Transverse colon (tissue), 4 donors: ENCODE measurements at regions of chr15 and their contacts with region 1.

Region 1: DNA sequence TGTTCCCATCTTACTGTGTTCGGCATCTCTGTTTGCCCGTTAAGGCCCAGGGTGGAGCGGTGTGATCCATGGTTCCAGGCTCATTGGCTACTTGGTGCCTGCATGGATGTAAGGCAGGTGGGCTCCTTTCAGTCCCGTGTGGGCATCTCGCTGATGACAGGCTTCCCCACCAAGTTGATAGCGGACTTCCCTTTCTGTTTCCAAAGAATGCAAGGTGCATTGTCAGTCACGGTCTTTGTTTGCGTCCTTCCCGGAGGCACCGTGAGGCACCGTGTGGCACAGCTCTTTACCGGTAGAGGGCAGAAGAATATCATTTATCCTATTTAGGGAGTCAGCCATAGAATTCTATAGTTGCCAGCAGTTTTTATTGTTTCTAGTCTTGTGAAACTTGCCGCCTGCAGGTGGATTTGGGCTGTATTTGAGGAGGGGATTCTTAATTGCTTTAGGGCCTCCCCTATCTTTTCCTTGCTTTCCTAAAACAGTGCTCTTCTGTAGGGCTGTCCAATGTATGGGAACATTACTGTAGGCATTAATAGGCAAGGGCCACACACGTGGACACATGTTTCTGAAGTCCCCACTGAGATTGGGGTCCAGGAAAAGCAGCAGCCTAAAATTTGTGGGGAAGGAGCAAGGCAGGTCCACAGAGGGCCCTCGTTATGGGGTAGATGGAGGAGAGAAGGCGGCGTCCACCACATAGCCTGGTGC is 244.1 kb downstream of the SLCO3A1 start:
- DNase-seq: peak; percentile 46
- H3K4me3 ChIP-seq: no peak overlapping the region
- H3K27ac ChIP-seq: no peak overlapping the region
- H3K4me1 ChIP-seq: peaks cover 0 to 6% (median 3%) of the 10 kb centered on the region in 4 donors
- H3K27me3 ChIP-seq: no peaks in the 10 kb centered on the region
- CTCF ChIP-seq: peak; percentile 67 to 82 (median 78)
- EP300 ChIP-seq: no peak
- POLR2A ChIP-seq: no peak

Region 2: DNA sequence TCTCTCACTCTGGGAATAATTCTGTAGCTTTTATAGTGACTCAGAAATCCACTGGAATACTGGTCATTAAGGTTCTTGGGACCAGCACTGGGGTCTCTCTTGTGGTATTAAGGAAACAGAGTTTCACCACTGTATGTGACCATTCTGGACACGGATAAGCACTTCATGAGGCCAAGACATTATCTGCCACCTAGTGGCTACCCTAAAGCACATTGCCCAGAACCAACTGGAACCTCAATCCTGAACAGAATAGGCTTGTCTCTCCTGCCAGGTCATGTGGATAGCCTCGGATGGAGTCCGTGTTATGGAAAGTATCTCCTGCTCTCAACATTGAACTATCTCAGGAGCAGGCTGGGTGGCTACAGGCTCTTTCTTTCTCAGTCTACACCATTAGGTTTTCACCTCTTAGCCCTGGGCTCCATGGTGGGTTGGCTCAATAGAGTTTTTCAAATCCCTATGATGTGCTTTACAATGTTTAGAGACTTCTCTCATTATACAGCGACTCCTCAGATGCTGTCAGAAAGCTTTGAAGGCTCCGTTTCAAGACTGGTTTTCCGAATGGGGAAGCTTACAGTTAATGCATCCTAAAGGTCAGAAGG is 128.5 kb after region 1 on chr15:
- in situ Hi-C with region 1: loop called in 2 of 4 experiments (anchors 10 kb)
- intact Hi-C with region 1: no loop called
- DNase-seq: no peak
- H3K4me3 ChIP-seq: no peak overlapping the region
- H3K27ac ChIP-seq: no peak overlapping the region
- H3K4me1 ChIP-seq: no peaks in the 10 kb centered on the region
- H3K27me3 ChIP-seq: no peaks in the 10 kb centered on the region
- CTCF ChIP-seq: peak; percentile 16 to 46 (median 42)
- EP300 ChIP-seq: no peak
- POLR2A ChIP-seq: no peak

Region 3: GRCh38 chr15:92383519-92384326 is 286.1 kb after region 1 on chr15:
- in situ Hi-C with region 1: loop called in 1 of 4 experiments (anchors 10 kb)
- intact Hi-C with region 1: no loop called
- DNase-seq: no peak
- H3K4me3 ChIP-seq: no peak overlapping the region
- H3K27ac ChIP-seq: no peak overlapping the region
- H3K4me1 ChIP-seq: no peaks in the 10 kb centered on the region
- H3K27me3 ChIP-seq: peaks cover 37% of the 10 kb centered on the region
- CTCF ChIP-seq: peak in 4 of 5 experiments; percentile 47 to 61 (median 58)
- EP300 ChIP-seq: no peak
- POLR2A ChIP-seq: no peak

Region 4: DNA sequence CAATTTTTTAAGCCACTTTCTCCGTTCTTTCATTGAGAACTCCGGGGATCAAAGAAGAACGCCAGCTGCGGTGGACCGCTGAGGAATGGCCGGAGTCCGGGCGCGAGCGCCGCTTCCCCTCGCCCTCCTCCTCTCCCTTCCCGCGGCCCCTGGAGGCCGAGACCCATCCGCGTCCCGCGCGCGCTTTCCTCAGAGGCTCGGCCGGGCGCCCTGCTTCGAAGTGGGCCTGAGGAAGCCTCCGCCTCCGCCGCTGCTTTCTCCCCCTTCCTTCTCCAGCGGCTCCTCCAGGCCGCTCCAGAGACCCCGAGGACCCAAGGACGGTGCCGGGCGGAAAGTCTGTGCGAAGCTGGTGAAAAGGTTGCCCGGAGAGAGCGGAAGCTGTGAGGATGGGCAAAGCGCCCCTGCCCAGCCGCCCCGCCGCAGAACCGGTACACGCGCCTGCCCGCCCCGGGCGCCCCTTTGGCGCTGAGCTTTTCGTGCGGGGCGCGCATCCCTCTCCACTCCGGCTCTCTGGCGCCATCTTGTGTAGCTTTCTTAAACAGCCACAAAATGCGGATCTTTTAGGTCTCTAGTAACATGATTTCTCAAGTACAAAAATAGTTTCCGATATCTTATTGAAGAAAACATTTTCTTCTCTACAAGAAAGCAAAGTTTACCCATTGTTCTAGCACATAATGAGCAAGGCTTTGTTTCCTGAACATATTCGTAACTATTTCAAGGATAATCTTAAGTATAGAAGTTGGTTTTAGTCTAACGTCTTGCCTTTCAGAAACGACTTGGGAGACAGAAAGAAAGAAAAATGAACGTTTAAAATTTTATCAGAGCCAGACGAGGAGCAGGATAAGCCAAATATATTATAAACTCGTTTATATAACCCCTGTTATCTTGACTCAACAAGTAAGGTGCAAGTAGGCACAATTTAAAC is 617.1 kb after region 1 on chr15:
- in situ Hi-C with region 1: loop called in 3 of 4 experiments (anchors 25 kb)
- intact Hi-C with region 1: loop called (anchors 10 kb)
- DNase-seq: peak; percentile 65
- H3K4me3 ChIP-seq: peak overlapping the region; percentile 24 to 62 (median 36)
- H3K27ac ChIP-seq: peak overlapping the region; percentile 73 to 82 (median 76)
- H3K4me1 ChIP-seq: peaks cover 0 to 4% (median 2%) of the 10 kb centered on the region in 4 donors
- H3K27me3 ChIP-seq: no peaks in the 10 kb centered on the region
- CTCF ChIP-seq: peak; percentile 81 to 91 (median 83)
- EP300 ChIP-seq: no peak
- POLR2A ChIP-seq: peak; percentile 21

Region 5: DNA sequence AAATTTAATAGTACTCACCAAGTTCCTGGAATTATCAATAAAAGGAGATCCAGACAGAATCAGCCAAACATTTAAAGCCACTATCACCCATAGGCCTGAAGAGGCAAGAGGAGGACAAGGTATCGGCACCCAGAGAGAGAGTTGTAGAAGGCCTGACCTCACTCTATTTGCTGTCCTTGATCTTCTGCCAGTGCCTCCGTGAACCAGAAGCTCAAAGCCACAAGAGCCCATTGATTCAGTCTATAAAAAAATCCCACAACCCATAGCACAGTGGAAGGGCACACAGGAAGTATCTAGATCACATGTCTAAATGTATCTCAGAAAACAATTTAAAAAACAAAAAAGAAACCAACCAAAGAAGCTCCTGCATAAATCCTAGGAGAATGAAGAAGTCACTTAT is 626.5 kb after region 1 on chr15:
- in situ Hi-C with region 1: loop called (anchors 10 to 25 kb)
- intact Hi-C with region 1: loop called (anchors 10 kb)
- DNase-seq: no peak
- H3K4me3 ChIP-seq: no peak overlapping the region
- H3K27ac ChIP-seq: no peak overlapping the region
- H3K4me1 ChIP-seq: no peaks in the 10 kb centered on the region
- H3K27me3 ChIP-seq: no peaks in the 10 kb centered on the region
- CTCF ChIP-seq: no peak
- EP300 ChIP-seq: no peak
- POLR2A ChIP-seq: no peak